ENCODE measurements at regions of chr9 and their contacts with region 1.

Region 1: GRCh38 chr9:28915256-28915930 is 1342.1 kb upstream of the C9orf72 start:
- DNase-seq: no peak
- ATAC-seq: no peak
- H3K4me3 ChIP-seq: no peak overlapping the region
- H3K27ac ChIP-seq: no peak overlapping the region
- H3K4me1 ChIP-seq: no peaks in the 10 kb centered on the region
- H3K27me3 ChIP-seq: no peaks in the 10 kb centered on the region
- CTCF ChIP-seq: no peak

Region 2: GRCh38 chr9:28616310-28616709 is 299.1 kb before region 1 on chr9:
- intact Hi-C with region 1: no loop called
- DNase-seq: no peak
- ATAC-seq: no peak
- H3K4me3 ChIP-seq: no peak overlapping the region
- H3K27ac ChIP-seq: no peak overlapping the region
- H3K4me1 ChIP-seq: no peaks in the 10 kb centered on the region
- H3K27me3 ChIP-seq: no peaks in the 10 kb centered on the region
- CTCF ChIP-seq: no peak

Region 3: DNA sequence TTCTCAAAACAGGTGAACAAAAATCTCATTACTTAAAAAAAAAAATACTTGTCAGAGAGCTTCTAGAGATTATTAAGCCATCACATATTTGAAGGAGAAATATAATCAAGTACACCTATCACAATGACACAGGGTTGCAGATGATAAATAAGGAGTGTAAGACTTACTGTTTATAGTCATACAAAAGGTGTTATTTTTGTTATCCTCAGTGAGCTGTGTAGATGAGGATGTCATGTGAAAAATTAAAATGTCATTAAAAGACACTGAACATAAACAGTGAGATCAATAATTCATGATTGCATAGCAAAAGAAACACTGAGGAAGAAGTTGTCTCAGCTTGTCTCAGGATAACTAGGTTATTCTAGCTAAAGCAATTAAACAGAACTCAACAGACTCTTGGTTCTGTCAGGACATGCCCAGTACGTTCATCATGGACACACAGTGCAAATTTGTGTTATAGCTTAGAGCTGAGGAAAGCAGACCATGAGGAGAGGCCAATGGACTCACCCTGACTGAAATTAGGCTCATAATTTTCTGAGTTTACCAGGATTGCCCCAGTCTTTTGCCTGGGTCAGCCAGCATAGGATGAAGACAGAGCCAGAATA is 179.6 kb before region 1 on chr9:
- intact Hi-C with region 1: no loop called
- DNase-seq: no peak
- ATAC-seq: no peak
- H3K4me3 ChIP-seq: no peak overlapping the region
- H3K27ac ChIP-seq: no peak overlapping the region
- H3K4me1 ChIP-seq: no peaks in the 10 kb centered on the region
- H3K27me3 ChIP-seq: no peaks in the 10 kb centered on the region
- CTCF ChIP-seq: no peak

Region 4: GRCh38 chr9:28808042-28808441 is 107.4 kb before region 1 on chr9:
- intact Hi-C with region 1: no loop called
- DNase-seq: no peak
- ATAC-seq: no peak
- H3K4me3 ChIP-seq: no peak overlapping the region
- H3K27ac ChIP-seq: no peak overlapping the region
- H3K4me1 ChIP-seq: no peaks in the 10 kb centered on the region
- H3K27me3 ChIP-seq: no peaks in the 10 kb centered on the region
- CTCF ChIP-seq: no peak

Region 5: GRCh38 chr9:28970241-28970654 is 54.9 kb after region 1 on chr9:
- intact Hi-C with region 1: loop called in 1 of 2 experiments (anchors 10 kb)
- DNase-seq: no peak
- ATAC-seq: no peak
- H3K4me3 ChIP-seq: no peak overlapping the region
- H3K27ac ChIP-seq: no peak overlapping the region
- H3K4me1 ChIP-seq: no peaks in the 10 kb centered on the region
- H3K27me3 ChIP-seq: no peaks in the 10 kb centered on the region
- CTCF ChIP-seq: no peak

Measured in psoas muscle (tissue), 8 donors.